ENCODE measurements at regions of chr16 and their contacts with region 1.

Region 1: DNA sequence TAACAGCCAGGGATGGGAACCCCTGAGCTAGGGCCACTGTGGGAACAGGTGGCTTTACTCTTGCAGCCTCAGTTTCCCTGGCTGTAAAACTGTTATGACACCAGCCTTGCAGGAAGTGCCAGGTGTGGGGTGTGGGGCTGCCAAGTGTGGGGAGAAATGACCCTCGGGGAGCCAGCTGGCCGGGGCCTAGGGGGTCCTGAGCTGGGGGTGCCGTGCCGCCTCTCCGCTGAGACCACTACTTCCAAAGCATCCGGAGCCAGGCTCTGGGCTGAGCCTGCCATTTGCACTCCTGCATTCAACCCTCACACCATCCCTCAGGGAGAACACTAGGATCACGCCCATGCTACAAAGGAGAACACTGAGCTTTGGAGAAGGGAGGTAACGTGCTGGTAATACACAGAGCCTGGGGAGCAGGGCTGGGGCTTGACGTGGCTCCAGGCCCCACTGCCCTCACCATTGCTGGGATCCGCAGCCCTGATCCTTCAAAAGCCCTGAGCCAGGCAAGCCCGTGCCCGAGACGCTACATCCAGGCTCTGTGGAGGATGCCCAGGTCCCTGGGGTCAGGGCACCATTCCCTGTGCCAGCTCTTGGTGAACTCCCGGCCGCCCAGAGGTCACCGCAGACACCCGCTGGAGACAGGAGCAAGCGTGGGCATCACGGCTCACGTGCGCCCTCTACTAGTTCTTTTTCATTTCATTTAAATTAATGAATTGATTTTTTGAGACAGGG is 28.8 kb upstream of the GINS2 start:
- DNase-seq: peak; percentile 43 to 80
- ATAC-seq: peak; percentile 54 to 67 (median 65)
- H3K4me3 ChIP-seq: no peak overlapping the region
- H3K4me3 Mint-ChIP-seq: no peak overlapping the region
- H3K27ac ChIP-seq: no peak overlapping the region
- H3K27ac Mint-ChIP-seq: no peak overlapping the region
- H3K4me1 ChIP-seq: peaks cover 9% of the 10 kb centered on the region
- H3K4me1 Mint-ChIP-seq: no peaks in the 10 kb centered on the region
- H3K27me3 ChIP-seq: no peaks in the 10 kb centered on the region
- H3K27me3 Mint-ChIP-seq: peaks cover 6% of the 10 kb centered on the region in 2 donors
- CTCF ChIP-seq: peak; percentile 77

Region 2: DNA sequence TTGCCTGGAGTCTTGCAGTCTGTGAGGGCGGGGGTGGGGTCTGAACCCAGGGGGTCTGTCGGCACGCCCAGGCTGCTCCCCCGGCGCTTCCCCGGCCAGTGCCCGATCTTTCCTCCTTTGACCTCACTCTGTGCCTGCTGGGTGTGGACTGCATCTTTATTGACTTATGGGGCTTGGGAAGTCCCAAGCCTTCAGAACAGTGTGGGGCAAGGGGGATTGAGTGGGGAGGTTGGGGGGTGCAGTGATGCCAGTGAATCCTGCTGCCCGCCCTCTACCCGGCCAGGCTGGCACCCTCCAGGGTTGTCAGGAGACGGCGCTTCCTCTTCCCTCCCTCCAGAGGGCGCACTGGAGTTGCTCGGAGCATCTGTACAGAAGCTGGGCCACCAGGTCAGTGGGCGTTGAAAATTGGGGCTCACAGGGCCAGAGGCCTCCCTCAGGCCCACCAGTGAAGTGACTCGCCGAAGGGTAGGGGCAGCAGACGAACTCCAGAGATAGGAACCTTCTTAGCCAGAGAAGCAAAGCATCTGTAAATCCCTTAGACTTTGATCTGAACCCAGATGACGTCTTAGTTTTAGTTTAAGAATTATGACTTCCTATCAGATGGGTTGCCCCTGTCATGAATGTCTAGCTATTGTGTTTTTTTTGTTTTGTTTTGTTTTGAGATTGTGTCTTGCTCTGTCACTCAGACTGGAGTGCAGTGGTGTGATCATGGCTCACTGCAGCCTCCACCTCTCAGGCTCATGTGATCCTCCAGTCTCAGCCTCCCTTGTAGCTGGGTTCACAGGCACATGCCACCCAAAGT is 420.5 kb before region 1 on chr16:
- intact Hi-C with region 1: loop called (anchors 5 kb)
- DNase-seq: peak; percentile 54 to 73
- ATAC-seq: peak; percentile 73 to 98 (median 93)
- H3K4me3 ChIP-seq: no peak overlapping the region
- H3K4me3 Mint-ChIP-seq: no peak overlapping the region
- H3K27ac ChIP-seq: no peak overlapping the region
- H3K27ac Mint-ChIP-seq: no peak overlapping the region
- H3K4me1 ChIP-seq: no peaks in the 10 kb centered on the region
- H3K4me1 Mint-ChIP-seq: peaks cover 0 to 3% of the 10 kb centered on the region in 2 donors
- H3K27me3 ChIP-seq: no peaks in the 10 kb centered on the region
- H3K27me3 Mint-ChIP-seq: peaks cover 0 to 6% of the 10 kb centered on the region in 2 donors
- CTCF ChIP-seq: peak; percentile 75

Region 3: GRCh38 chr16:85369741-85370528 is 347.6 kb before region 1 on chr16:
- intact Hi-C with region 1: loop called (anchors 5 kb)
- DNase-seq: peak; percentile 54 to 62
- ATAC-seq: peak in 2 of 3 donors; percentile 73 to 74
- H3K4me3 ChIP-seq: no peak overlapping the region
- H3K4me3 Mint-ChIP-seq: no peak overlapping the region
- H3K27ac ChIP-seq: no peak overlapping the region
- H3K27ac Mint-ChIP-seq: no peak overlapping the region
- H3K4me1 ChIP-seq: no peaks in the 10 kb centered on the region
- H3K4me1 Mint-ChIP-seq: no peaks in the 10 kb centered on the region
- H3K27me3 ChIP-seq: peaks cover 2% of the 10 kb centered on the region
- H3K27me3 Mint-ChIP-seq: no peaks in the 10 kb centered on the region
- CTCF ChIP-seq: peak; percentile 71

Region 4: GRCh38 chr16:85420501-85421337 is 296.8 kb before region 1 on chr16:
- intact Hi-C with region 1: loop called (anchors 1 kb)
- DNase-seq: peak; percentile 83 to 87
- ATAC-seq: peak; percentile 92 to 95 (median 93)
- H3K4me3 ChIP-seq: no peak overlapping the region
- H3K4me3 Mint-ChIP-seq: no peak overlapping the region
- H3K27ac ChIP-seq: no peak overlapping the region
- H3K27ac Mint-ChIP-seq: peak overlapping the region in 1 of 2 donors; percentile 65
- H3K4me1 ChIP-seq: peaks cover 12% of the 10 kb centered on the region
- H3K4me1 Mint-ChIP-seq: peaks cover 5% of the 10 kb centered on the region in 2 donors
- H3K27me3 ChIP-seq: no peaks in the 10 kb centered on the region
- H3K27me3 Mint-ChIP-seq: peaks cover 0 to 14% of the 10 kb centered on the region in 2 donors
- CTCF ChIP-seq: peak; percentile 100

Region 5: DNA sequence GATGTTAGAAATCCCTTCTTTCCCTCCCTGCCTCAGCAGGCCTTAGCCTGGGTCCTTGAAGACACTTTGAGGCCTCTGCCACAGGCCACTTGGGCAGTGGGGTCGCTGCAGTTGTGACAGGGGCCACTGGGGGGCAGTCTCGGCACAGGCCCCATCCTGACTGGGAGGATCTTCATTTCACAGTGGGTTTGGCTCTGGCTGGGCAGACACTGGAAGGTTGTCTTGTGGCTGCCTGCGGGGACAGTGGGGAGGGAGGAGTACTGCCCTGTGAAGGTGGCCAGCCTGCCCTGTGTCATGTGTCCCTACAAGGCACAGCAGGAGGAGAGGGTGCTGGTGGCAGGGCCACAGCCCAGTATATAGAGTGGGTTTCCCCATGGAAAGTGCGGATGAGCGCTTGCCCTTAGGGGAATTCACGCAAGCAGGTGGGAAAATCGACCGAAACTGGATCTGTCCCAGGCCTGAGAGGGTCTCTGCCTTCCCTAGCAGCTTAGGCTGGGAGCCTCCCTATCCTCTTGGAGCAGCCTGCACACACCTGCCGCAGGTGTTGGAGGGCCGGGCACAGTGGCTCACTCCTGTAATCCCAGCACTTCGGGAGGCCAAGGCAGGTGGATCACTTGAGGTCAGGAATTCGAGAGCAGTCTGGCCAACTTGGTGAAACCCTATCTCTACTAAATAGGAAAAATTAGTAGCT is 57.6 kb before region 1 on chr16:
- intact Hi-C with region 1: loop called (anchors 10 kb)
- DNase-seq: peak; percentile 60 to 71
- ATAC-seq: peak; percentile 69 to 96 (median 87)
- H3K4me3 ChIP-seq: no peak overlapping the region
- H3K4me3 Mint-ChIP-seq: no peak overlapping the region
- H3K27ac ChIP-seq: no peak overlapping the region
- H3K27ac Mint-ChIP-seq: peak overlapping the region; percentile 60 to 84
- H3K4me1 ChIP-seq: no peaks in the 10 kb centered on the region
- H3K4me1 Mint-ChIP-seq: peaks cover 5% of the 10 kb centered on the region in 2 donors
- H3K27me3 ChIP-seq: no peaks in the 10 kb centered on the region
- H3K27me3 Mint-ChIP-seq: no peaks in the 10 kb centered on the region
- CTCF ChIP-seq: peak; percentile 76